PC-3 (cell line): ENCODE measurements at regions of chr18 and their contacts with region 1.

Region 1: GRCh38 chr18:67864677-67865340 is 348.3 kb upstream of the DSEL start:
- DNase-seq: peak; percentile 60
- ATAC-seq: peak; percentile 79
- H3K4me3 ChIP-seq: no peak overlapping the region
- H3K27ac ChIP-seq: peak overlapping the region; percentile 43
- H3K4me1 ChIP-seq: peaks cover 13% of the 10 kb centered on the region
- H3K27me3 ChIP-seq: no peaks in the 10 kb centered on the region
- CTCF ChIP-seq: peak; percentile 57

Region 2: DNA sequence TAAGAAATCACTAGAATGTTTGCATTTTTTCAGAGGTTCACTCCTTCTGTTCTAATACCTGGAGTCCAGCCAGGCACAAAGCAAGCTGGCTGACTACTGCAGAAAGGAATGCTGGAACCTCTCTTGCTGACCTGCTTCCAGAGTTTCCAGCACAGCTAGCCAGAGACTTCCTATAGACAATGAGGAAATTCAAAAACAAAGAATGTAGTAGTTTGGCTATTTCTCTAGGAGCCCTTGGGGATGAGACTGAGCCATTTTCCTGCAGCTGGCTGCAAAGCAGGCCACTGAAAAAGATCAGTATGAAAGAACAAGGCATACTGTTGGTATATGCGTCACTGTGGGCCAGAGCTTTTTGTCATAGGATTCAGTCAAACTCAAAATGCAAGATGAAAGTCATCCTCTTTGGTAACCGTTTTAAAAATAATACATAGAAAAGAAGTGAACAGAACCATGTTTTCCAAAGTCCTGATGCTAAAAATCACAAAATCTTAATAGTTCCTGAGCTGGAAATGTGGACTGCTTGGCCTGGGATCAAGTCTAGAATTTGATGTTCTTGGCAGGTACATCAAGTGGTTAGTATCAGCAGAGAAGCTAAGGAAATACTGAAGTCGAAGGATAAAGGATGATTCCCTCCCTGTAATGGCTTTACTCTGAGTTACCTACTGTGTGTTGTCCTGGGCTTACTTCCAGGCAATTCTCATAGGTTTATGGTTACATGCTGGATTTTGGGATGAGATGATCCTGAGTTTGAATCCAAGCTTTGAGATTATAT is 339.3 kb before region 1 on chr18:
- CTCF ChIA-PET with region 1: interaction called, 4 read pairs
- POLR2A ChIA-PET with region 1: no interaction called
- intact Hi-C with region 1: loop called (anchors 2 kb)
- DNase-seq: peak; percentile 93
- ATAC-seq: peak; percentile 99
- H3K4me3 ChIP-seq: no peak overlapping the region
- H3K27ac ChIP-seq: peak overlapping the region; percentile 34; the same call in 1 of the 2 replicates
- H3K4me1 ChIP-seq: peaks cover 16% of the 10 kb centered on the region
- H3K27me3 ChIP-seq: no peaks in the 10 kb centered on the region
- CTCF ChIP-seq: no peak

Region 3: DNA sequence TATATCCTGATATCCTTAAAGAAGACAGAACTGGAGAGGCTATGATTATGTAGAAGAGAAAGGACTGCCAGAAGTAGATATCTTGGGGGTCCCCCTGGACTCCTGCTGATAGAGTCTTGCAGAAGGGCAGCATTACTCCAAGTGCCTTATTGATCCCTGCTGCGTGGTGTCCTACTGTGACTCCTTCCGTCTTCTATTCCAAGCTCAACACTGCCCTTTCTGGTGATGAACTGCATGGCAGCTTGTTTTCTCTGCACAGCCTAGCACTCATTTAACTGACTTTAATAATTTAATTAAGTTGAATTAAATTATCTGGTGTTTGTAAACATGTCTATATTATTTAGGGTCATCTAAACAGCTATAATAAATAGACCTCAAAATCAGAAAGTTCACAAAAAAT is 154.2 kb before region 1 on chr18:
- CTCF ChIA-PET with region 1: no interaction called
- POLR2A ChIA-PET with region 1: no interaction called
- intact Hi-C with region 1: no loop called
- DNase-seq: peak; percentile 19
- ATAC-seq: no peak; the same call in 1 of the 2 replicates
- H3K4me3 ChIP-seq: no peak overlapping the region
- H3K27ac ChIP-seq: no peak overlapping the region
- H3K4me1 ChIP-seq: no peaks in the 10 kb centered on the region
- H3K27me3 ChIP-seq: no peaks in the 10 kb centered on the region
- CTCF ChIP-seq: peak; percentile 52

Region 4: DNA sequence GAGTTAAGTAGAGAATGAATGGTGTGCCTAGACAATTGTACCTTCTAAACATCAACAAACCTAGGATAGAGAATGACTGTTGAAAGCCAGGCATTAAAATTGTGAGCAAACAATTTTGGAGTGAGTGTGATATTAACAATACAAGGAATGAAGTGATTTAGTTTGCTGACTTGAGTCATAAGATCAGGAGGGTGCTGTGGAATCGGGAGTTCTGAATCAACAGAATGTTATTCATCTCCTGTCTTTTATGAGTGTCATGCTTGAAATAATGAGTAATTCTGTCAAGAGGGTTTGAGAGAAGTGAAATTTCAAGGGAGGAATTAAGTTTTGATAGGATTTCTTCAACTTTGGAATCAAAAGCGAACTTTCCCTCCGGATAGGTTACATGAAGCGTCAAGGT is 133.9 kb before region 1 on chr18:
- CTCF ChIA-PET with region 1: no interaction called
- POLR2A ChIA-PET with region 1: no interaction called
- intact Hi-C with region 1: loop called (anchors 5 kb)
- DNase-seq: peak; percentile 94
- ATAC-seq: peak; percentile 90
- H3K4me3 ChIP-seq: peak overlapping the region; percentile 27; the same call in 1 of the 2 replicates
- H3K27ac ChIP-seq: peak overlapping the region; percentile 94
- H3K4me1 ChIP-seq: peaks cover 47% of the 10 kb centered on the region
- H3K27me3 ChIP-seq: no peaks in the 10 kb centered on the region
- CTCF ChIP-seq: no peak

Region 5: GRCh38 chr18:67893916-67894315 is 29.1 kb after region 1 on chr18:
- CTCF ChIA-PET with region 1: no interaction called
- POLR2A ChIA-PET with region 1: no interaction called
- intact Hi-C with region 1: loop called (anchors 2 kb)
- DNase-seq: no peak
- ATAC-seq: no peak
- H3K4me3 ChIP-seq: no peak overlapping the region
- H3K27ac ChIP-seq: no peak overlapping the region
- H3K4me1 ChIP-seq: no peaks in the 10 kb centered on the region
- H3K27me3 ChIP-seq: no peaks in the 10 kb centered on the region
- CTCF ChIP-seq: no peak

Region 6: GRCh38 chr18:68623342-68623741 is 758.5 kb after region 1 on chr18:
- CTCF ChIA-PET with region 1: no interaction called
- POLR2A ChIA-PET with region 1: no interaction called
- intact Hi-C with region 1: loop called (anchors 5 kb)
- DNase-seq: peak; percentile 78
- ATAC-seq: peak; percentile 57
- H3K4me3 ChIP-seq: no peak overlapping the region
- H3K27ac ChIP-seq: no peak overlapping the region
- H3K4me1 ChIP-seq: no peaks in the 10 kb centered on the region
- H3K27me3 ChIP-seq: no peaks in the 10 kb centered on the region
- CTCF ChIP-seq: peak; percentile 88

Region 7: GRCh38 chr18:68660354-68661183 is 795.8 kb after region 1 on chr18:
- CTCF ChIA-PET with region 1: no interaction called
- POLR2A ChIA-PET with region 1: no interaction called
- intact Hi-C with region 1: loop called (anchors 10 kb)
- DNase-seq: peak; percentile 69
- ATAC-seq: peak; percentile 78
- H3K4me3 ChIP-seq: peak overlapping the region; percentile 45; the same call in 1 of the 2 replicates
- H3K27ac ChIP-seq: no peak overlapping the region
- H3K4me1 ChIP-seq: peaks cover 8% of the 10 kb centered on the region; the same call in 1 of the 2 replicates
- H3K27me3 ChIP-seq: no peaks in the 10 kb centered on the region
- CTCF ChIP-seq: peak; percentile 79